ENCODE measurements at regions of chr6 and their contacts with region 1.

Region 1: DNA sequence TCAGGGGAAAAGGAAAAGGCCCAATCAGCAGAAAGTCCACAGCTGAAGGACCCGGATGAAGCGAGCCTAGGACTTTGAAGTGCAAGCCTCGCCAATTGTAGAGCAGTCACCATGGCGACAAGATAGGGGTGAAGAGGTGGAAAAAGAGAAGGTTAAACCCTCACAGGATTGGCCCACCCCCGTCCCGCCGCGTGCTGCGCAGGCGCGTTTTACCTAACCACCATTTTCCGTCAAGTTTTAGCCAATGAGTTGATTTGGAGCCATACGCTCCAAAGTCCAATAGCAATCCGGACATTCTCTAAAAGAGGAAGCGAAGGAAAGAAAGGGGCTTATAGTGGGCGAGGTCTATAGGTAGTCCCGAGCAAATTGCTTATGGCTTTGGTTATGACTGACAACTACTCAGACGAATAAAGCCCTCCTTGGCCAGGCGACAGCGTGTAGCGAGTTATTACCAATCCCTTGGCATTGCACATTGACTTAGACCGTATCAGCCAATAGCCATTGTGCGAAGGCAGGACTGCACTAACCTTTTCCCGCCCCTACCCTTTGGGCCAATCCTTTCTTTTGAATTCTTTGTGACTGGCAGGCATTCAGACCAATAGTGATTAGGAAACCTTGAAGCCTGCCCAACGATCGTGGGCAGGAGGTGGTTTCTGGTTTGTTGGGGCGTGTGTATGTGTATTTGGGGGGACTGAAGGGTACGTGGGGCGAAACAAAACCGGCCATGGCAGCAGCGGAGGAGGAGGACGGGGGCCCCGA is at the start of gene RNF5:
- DNase-seq: peak; percentile 60 to 99 (median 97)
- ATAC-seq: peak; percentile 89
- H3K4me3 ChIP-seq: peak within 1 kb of the TSS; percentile 82
- H3K4me3 Mint-ChIP-seq: peak within 1 kb of the TSS; percentile 85 to 98 (median 95)
- H3K27ac ChIP-seq: peak within 1 kb of the TSS; percentile 91
- H3K27ac Mint-ChIP-seq: peak within 1 kb of the TSS; percentile 87 to 100 (median 95)
- H3K4me1 ChIP-seq: peaks cover 31 to 63% of the 10 kb centered on the region in 2 donors
- H3K4me1 Mint-ChIP-seq: peaks cover 63 to 86% (median 69%) of the 10 kb centered on the region in 7 donors
- H3K27me3 ChIP-seq: no peaks in the 10 kb centered on the region
- H3K27me3 Mint-ChIP-seq: no peaks in the 10 kb centered on the region
- total RNA-seq, gene RNF5: 17.0 to 50.6 (median 40.9) TPM

Region 2: DNA sequence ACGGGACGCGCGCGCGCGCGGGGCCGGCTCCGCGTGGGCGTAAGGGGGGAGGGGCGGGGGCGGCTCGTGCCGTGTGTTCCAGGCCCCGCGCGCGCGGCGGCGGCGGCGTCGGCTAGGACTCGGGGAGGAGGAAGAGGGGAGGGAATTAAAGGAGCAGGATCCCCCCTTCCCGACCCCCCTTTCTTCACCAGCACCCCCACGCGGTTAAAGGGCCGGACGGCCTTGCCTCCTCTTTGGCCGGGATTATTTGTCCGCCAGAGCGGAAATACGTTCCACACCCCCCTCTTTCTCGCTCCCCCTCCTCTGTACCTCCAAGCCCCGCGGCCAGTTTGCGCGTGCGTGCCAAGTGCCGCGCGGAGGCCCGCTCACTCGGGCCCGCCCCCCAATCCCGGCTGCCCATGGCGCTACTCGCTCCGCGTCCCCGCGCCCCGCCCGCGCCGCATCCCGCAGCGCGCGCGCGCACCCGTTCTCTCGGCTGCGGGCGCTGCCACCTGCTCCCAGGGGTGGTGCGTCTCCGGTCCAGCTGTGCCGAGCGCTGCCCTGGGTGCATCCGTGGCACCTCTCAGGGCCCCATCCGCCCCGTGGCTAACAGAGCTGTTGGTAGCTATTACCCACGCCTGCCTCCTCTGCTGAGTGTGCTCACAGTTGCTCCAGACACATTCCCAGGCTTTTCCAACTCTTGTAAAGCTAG is 275.9 kb before region 1 on chr6 and contains the start of gene ZBTB12:
- CTCF ChIA-PET with region 1: interaction called, 3 read pairs
- POLR2A ChIA-PET with region 1: no interaction called
- intact Hi-C with region 1: loop called in 1 of 2 experiments (anchors 5 kb)
- DNase-seq: peak; percentile 76 to 90 (median 84)
- ATAC-seq: peak; percentile 76
- H3K4me3 ChIP-seq: peak within 1 kb of the TSS; percentile 80
- H3K4me3 Mint-ChIP-seq: peak within 1 kb of the TSS; percentile 81 to 96 (median 88)
- H3K27ac ChIP-seq: peak within 1 kb of the TSS; percentile 83
- H3K27ac Mint-ChIP-seq: peak within 1 kb of the TSS; percentile 75 to 94 (median 86)
- H3K4me1 ChIP-seq: peaks cover 12 to 16% of the 10 kb centered on the region in 2 donors
- H3K4me1 Mint-ChIP-seq: peaks cover 18 to 34% (median 32%) of the 10 kb centered on the region in 7 donors
- H3K27me3 ChIP-seq: no peaks in the 10 kb centered on the region
- H3K27me3 Mint-ChIP-seq: peaks cover 0 to 11% (median 0%) of the 10 kb centered on the region in 5 donors
- total RNA-seq, gene ZBTB12: 0.77 to 4.5 (median 2.5) TPM

Region 3: DNA sequence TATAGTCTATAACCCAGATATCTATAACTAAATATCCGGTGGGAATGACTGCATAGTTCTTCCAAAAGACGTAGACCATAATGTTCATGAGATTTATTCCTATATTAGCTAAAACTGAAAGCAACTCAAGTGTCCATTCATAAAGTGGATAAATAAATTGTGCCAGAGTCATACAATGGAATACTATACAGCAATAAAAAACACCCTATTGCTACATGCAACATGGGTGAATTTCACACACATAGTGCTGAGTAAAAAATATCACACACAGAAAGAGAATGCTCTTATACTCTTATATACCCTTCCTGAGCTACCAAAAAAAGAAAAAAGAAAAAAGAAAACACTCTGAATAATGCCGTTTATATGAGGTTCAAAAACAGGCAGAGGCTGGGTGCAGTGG is 75.7 kb before region 1 on chr6:
- CTCF ChIA-PET with region 1: no interaction called
- POLR2A ChIA-PET with region 1: no interaction called
- intact Hi-C with region 1: no loop called
- DNase-seq: no peak
- ATAC-seq: no peak
- H3K4me3 ChIP-seq: no peak overlapping the region
- H3K4me3 Mint-ChIP-seq: no peak overlapping the region
- H3K27ac ChIP-seq: no peak overlapping the region
- H3K27ac Mint-ChIP-seq: no peak overlapping the region
- H3K4me1 ChIP-seq: no peaks in the 10 kb centered on the region
- H3K4me1 Mint-ChIP-seq: peaks cover 0 to 8% (median 4%) of the 10 kb centered on the region in 7 donors
- H3K27me3 ChIP-seq: no peaks in the 10 kb centered on the region
- H3K27me3 Mint-ChIP-seq: peaks cover 15 to 50% (median 22%) of the 10 kb centered on the region in 5 donors

Region 4: DNA sequence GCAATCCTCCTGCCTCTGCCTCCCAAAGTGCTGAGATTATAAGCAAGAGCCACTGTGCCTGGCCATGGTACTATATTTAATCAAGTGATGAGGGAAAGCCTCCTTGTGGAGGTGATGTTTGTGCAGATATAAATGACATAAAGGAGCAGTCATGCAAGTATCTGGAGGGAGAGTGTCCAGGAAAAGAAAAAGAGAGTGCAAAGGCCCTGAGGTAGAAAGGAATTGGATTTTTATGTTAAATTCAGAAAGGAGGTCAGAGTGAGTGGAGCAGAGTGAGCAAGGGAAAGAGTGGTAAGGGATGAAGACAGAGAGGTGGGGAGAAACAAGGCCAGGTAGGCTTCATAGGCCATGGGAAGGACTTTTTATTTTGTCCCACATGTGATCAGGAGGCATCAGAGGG is 40.5 kb before region 1 on chr6:
- CTCF ChIA-PET with region 1: no interaction called
- POLR2A ChIA-PET with region 1: no interaction called
- intact Hi-C with region 1: no loop called
- DNase-seq: no peak
- ATAC-seq: no peak
- H3K4me3 ChIP-seq: no peak overlapping the region
- H3K4me3 Mint-ChIP-seq: no peak overlapping the region
- H3K27ac ChIP-seq: no peak overlapping the region
- H3K27ac Mint-ChIP-seq: no peak overlapping the region
- H3K4me1 ChIP-seq: no peaks in the 10 kb centered on the region
- H3K4me1 Mint-ChIP-seq: peaks cover 0 to 9% (median 0%) of the 10 kb centered on the region in 7 donors
- H3K27me3 ChIP-seq: no peaks in the 10 kb centered on the region
- H3K27me3 Mint-ChIP-seq: peaks cover 0 to 17% (median 0%) of the 10 kb centered on the region in 5 donors

Region 5: GRCh38 chr6:32148289-32149091 is 29.5 kb before region 1 on chr6:
- CTCF ChIA-PET with region 1: interaction called, 3 read pairs
- POLR2A ChIA-PET with region 1: interaction called, 4 read pairs
- intact Hi-C with region 1: loop called in 1 of 2 experiments (anchors 1 kb)
- DNase-seq: peak; percentile 62 to 82 (median 72)
- ATAC-seq: peak; percentile 91
- H3K4me3 ChIP-seq: peak overlapping the region; percentile 30
- H3K4me3 Mint-ChIP-seq: peak overlapping the region; percentile 75 to 91 (median 86)
- H3K27ac ChIP-seq: peak overlapping the region; percentile 47
- H3K27ac Mint-ChIP-seq: peak overlapping the region; percentile 46 to 91 (median 85)
- H3K4me1 ChIP-seq: peaks cover 0 to 22% of the 10 kb centered on the region in 2 donors
- H3K4me1 Mint-ChIP-seq: peaks cover 37 to 49% (median 46%) of the 10 kb centered on the region in 7 donors
- H3K27me3 ChIP-seq: no peaks in the 10 kb centered on the region
- H3K27me3 Mint-ChIP-seq: peaks cover 0 to 62% (median 12%) of the 10 kb centered on the region in 5 donors

Region 6: GRCh38 chr6:32153564-32154513 is 24.1 kb before region 1 on chr6 and contains the start of gene PPT2:
- CTCF ChIA-PET with region 1: interaction called, 3 read pairs
- POLR2A ChIA-PET with region 1: interaction called, 3 read pairs
- intact Hi-C with region 1: loop called (anchors 1 kb)
- DNase-seq: peak; percentile 34 to 85 (median 72)
- ATAC-seq: peak; percentile 82
- H3K4me3 ChIP-seq: peak within 1 kb of the TSS; percentile 68
- H3K4me3 Mint-ChIP-seq: peak within 1 kb of the TSS; percentile 87 to 100 (median 98)
- H3K27ac ChIP-seq: peak within 1 kb of the TSS; percentile 82
- H3K27ac Mint-ChIP-seq: peak within 1 kb of the TSS; percentile 87 to 98 (median 92)
- H3K4me1 ChIP-seq: peaks cover 10 to 35% of the 10 kb centered on the region in 2 donors
- H3K4me1 Mint-ChIP-seq: peaks cover 42 to 74% (median 65%) of the 10 kb centered on the region in 7 donors
- H3K27me3 ChIP-seq: no peaks in the 10 kb centered on the region
- H3K27me3 Mint-ChIP-seq: peaks cover 0 to 34% (median 12%) of the 10 kb centered on the region in 5 donors
- total RNA-seq, gene PPT2: 11.8 to 21.9 (median 15.8) TPM

Region 7: DNA sequence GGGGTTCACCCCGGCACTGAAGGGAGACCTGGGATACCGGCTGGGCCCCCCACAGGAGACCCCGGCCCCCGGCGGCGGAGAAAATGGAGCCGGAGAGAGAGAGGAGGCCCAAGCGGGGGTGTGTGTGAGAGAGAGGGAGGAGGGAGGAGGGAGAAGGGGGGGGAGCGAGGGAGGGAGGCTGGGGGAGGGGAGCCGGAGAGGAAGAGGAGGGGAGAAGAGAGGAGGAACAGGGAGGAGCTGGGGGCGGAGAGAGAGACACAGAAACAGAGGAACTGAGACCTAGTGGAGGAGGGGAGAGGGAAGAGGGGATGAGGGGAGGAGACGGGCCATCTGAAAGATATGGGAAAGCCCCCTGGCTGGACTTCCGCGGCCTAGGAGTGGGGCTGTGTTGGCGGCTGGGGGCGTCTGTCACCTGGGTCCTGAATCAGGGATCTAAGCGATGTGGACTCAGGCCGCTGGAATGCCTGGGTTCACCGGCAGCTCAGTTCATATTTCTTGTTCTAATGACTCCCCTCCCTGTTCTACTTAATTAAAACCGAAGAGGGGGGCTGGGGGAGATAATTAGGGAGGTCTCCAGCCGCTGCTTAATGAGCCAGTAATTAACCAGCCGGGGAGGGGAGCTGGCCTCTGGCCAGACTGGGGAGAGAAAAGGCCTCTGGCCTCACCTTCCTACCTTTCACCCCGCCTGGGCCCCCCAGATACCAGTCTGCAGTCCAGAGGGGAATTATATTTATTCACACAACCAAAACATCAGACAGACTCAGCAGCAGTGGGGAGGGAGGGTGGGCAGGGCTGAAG is 12.3 kb after region 1 on chr6 and contains the start of gene PBX2:
- CTCF ChIA-PET with region 1: interaction called, 10 read pairs
- POLR2A ChIA-PET with region 1: interaction called, 259 read pairs
- intact Hi-C with region 1: loop called (anchors 1 kb)
- DNase-seq: peak; percentile 35 to 82 (median 76)
- ATAC-seq: peak; percentile 80
- H3K4me3 ChIP-seq: peak within 1 kb of the TSS; percentile 94
- H3K4me3 Mint-ChIP-seq: peak within 1 kb of the TSS; percentile 97 to 100 (median 98)
- H3K27ac ChIP-seq: peak within 1 kb of the TSS; percentile 97
- H3K27ac Mint-ChIP-seq: peak within 1 kb of the TSS; percentile 86 to 100 (median 97)
- H3K4me1 ChIP-seq: peaks cover 37 to 46% of the 10 kb centered on the region in 2 donors
- H3K4me1 Mint-ChIP-seq: peaks cover 52 to 62% (median 58%) of the 10 kb centered on the region in 7 donors
- H3K27me3 ChIP-seq: no peaks in the 10 kb centered on the region
- H3K27me3 Mint-ChIP-seq: no peaks in the 10 kb centered on the region
- total RNA-seq, gene PBX2: 105 to 221 (median 144) TPM

Region 8: DNA sequence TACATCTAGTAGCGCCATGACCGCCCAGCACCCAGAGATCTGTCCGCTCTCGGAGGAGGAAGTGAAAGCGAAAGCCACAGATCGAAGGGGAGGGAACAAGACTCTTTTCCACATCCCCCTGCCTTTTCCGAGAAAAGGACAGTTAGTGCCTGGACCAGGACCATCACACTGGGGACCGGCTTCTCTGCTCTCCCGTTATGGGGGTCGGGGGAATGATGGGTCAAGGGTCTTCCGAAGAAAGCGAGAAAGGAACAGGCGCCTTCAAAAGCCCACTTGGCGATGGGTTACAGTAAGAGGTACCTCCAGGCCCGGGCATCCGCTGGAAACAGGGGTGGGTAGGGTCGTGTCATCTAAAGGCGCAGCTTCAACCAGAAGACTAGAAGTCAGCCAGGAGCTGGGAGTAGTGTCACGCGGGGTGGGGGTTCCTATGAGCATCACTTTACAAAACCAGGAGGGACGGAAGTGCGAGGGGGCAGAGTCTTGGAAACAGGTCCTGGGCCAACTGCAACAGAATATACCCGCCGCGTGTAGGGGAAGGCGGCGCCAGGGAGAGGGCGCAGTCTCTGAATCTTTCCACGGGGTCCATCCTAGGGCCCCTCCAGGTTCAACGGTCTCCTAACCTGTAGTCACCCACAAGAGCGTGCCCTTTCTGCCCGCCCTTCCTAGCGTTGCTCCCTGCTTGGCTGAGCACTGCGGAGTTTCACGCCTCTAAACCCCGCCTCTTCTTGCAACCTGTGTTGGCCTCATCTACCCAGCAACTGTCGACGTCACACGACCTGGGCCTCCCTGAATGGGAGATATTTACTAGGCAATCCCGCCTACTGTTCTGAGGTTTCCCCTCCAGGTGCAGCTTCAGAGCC is 666.2 kb after region 1 on chr6 and contains the start of gene PSMB8:
- CTCF ChIA-PET with region 1: no interaction called
- POLR2A ChIA-PET with region 1: interaction called, 10 read pairs
- intact Hi-C with region 1: loop called (anchors 1 kb)
- DNase-seq: peak; percentile 92 to 99 (median 97)
- ATAC-seq: peak; percentile 90
- H3K4me3 ChIP-seq: peak within 1 kb of the TSS; percentile 97
- H3K4me3 Mint-ChIP-seq: peak within 1 kb of the TSS; percentile 92 to 99 (median 98)
- H3K27ac ChIP-seq: peak within 1 kb of the TSS; percentile 97
- H3K27ac Mint-ChIP-seq: peak within 1 kb of the TSS; percentile 99 to 100 (median 100)
- H3K4me1 ChIP-seq: peaks cover 71 to 72% of the 10 kb centered on the region in 2 donors
- H3K4me1 Mint-ChIP-seq: peaks cover 66 to 83% (median 79%) of the 10 kb centered on the region in 7 donors
- H3K27me3 ChIP-seq: no peaks in the 10 kb centered on the region
- H3K27me3 Mint-ChIP-seq: no peaks in the 10 kb centered on the region
- total RNA-seq, gene PSMB8: 111 to 419 (median 115) TPM

Region 9: DNA sequence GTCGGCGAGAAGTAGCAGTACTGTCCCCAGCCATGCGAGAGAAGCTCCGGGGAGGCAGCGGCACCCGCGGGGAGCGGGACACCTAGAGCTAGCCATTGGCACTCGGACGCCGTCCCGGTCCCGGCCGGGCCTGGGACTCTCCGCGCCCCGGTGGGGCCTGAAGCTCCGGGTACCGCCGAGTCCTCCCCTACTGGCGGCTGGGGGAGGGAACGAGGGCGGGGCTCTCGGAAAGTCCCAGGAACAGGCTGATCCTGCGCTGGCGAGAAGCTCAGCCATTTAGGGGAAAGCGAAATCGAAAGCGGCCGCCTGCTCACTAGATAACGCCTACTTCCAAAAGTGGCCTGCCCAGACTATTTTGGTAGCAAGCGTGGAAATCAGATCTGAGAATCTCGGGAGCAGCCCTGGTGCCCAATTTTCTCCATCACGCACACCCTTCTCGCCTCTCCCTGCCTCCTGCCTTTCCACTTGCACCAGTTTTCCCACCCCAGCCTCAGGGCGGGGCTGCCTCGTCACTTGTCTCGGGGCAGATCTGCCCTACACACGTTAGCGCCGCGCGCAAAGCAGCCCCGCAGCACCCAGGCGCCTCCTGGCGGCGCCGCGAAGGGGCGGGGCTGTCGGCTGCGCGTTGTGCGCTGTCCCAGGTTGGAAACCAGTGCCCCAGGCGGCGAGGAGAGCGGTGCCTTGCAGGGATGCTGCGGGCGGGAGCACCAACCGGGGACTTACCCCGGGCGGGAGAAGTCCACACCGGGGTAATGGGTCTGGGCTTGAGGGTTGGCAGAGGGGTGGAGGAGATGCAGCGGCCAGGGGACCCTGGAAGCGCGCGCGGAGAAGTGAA is 675.8 kb after region 1 on chr6 and contains the starts of genes PSMB9 and TAP1:
- CTCF ChIA-PET with region 1: no interaction called
- POLR2A ChIA-PET with region 1: interaction called, 3 read pairs
- intact Hi-C with region 1: loop called in 1 of 2 experiments (anchors 2 kb)
- DNase-seq: peak; percentile 92 to 97 (median 94)
- ATAC-seq: peak; percentile 92
- H3K4me3 ChIP-seq: peak within 1 kb of the TSS; percentile 91
- H3K4me3 Mint-ChIP-seq: peak within 1 kb of the TSS; percentile 96 to 100 (median 100)
- H3K27ac ChIP-seq: peak within 1 kb of the TSS; percentile 100
- H3K27ac Mint-ChIP-seq: peak within 1 kb of the TSS; percentile 97 to 100 (median 100)
- H3K4me1 ChIP-seq: peaks cover 45 to 57% of the 10 kb centered on the region in 2 donors
- H3K4me1 Mint-ChIP-seq: peaks cover 61 to 80% (median 72%) of the 10 kb centered on the region in 7 donors
- H3K27me3 ChIP-seq: no peaks in the 10 kb centered on the region
- H3K27me3 Mint-ChIP-seq: no peaks in the 10 kb centered on the region
- total RNA-seq, gene PSMB9: 70.3 to 452 (median 90.5) TPM
- total RNA-seq, gene TAP1: 92.1 to 500 (median 103) TPM